CD8-positive, alpha-beta T cell (primary cell): ENCODE measurements at regions of chr16 and their contacts with region 1.

Region 1: GRCh38 chr16:71808593-71809459 is at the start of gene AP1G1:
- DNase-seq: peak; percentile 87 to 99 (median 93)
- ATAC-seq: peak; percentile 89
- H3K4me3 ChIP-seq: peak within 1 kb of the TSS; percentile 95
- H3K4me3 Mint-ChIP-seq: peak within 1 kb of the TSS; percentile 95
- H3K27ac ChIP-seq: peak within 1 kb of the TSS; percentile 98
- H3K27ac Mint-ChIP-seq: peak within 1 kb of the TSS; percentile 99
- H3K4me1 ChIP-seq: peaks cover 26% of the 10 kb centered on the region
- H3K4me1 Mint-ChIP-seq: peaks cover 40% of the 10 kb centered on the region
- H3K27me3 ChIP-seq: no peaks in the 10 kb centered on the region
- H3K27me3 Mint-ChIP-seq: no peaks in the 10 kb centered on the region
- CTCF ChIP-seq: no peak
- total RNA-seq, gene AP1G1: 179 to 202 TPM

Region 2: DNA sequence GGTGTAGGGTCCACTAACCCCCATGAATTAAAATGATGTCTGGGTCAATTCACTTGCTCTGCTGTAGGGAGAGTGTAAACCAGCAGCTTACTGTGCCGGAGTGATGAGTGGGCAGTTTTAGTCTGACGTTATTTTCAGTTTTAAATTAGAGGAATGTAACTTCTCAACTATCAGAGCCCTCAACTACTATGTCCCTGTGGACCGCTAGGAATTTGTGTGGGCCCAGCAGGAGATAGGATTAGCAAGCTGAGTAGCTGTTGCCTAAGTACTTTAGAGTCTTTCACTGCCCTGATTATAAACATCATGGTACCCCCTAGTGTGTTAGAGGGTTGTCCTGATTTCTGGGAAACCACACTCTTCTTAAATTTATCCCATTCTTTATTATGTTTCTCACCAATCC is 171.4 kb before region 1 on chr16:
- CTCF ChIA-PET with region 1: no interaction called
- POLR2A ChIA-PET with region 1: no interaction called
- intact Hi-C with region 1: no loop called
- DNase-seq: no peak
- ATAC-seq: no peak
- H3K4me3 ChIP-seq: no peak overlapping the region
- H3K4me3 Mint-ChIP-seq: no peak overlapping the region
- H3K27ac ChIP-seq: no peak overlapping the region
- H3K27ac Mint-ChIP-seq: no peak overlapping the region
- H3K4me1 ChIP-seq: no peaks in the 10 kb centered on the region
- H3K4me1 Mint-ChIP-seq: no peaks in the 10 kb centered on the region
- H3K27me3 ChIP-seq: no peaks in the 10 kb centered on the region
- H3K27me3 Mint-ChIP-seq: no peaks in the 10 kb centered on the region
- CTCF ChIP-seq: no peak

Region 3: GRCh38 chr16:71794943-71795342 is 13.9 kb before region 1 on chr16:
- CTCF ChIA-PET with region 1: interaction called, 3 read pairs
- POLR2A ChIA-PET with region 1: interaction called, 11 read pairs
- intact Hi-C with region 1: no loop called
- DNase-seq: no peak
- ATAC-seq: no peak
- H3K4me3 ChIP-seq: no peak overlapping the region
- H3K4me3 Mint-ChIP-seq: peak overlapping the region; percentile 3
- H3K27ac ChIP-seq: peak overlapping the region in 1 of 2 experiments; percentile 31
- H3K27ac Mint-ChIP-seq: peak overlapping the region; percentile 32
- H3K4me1 ChIP-seq: peaks cover 53% of the 10 kb centered on the region
- H3K4me1 Mint-ChIP-seq: peaks cover 65% of the 10 kb centered on the region
- H3K27me3 ChIP-seq: no peaks in the 10 kb centered on the region
- H3K27me3 Mint-ChIP-seq: no peaks in the 10 kb centered on the region
- CTCF ChIP-seq: no peak

Region 4: GRCh38 chr16:71845639-71846430 is 37.0 kb after region 1 on chr16 and contains the start of gene ATXN1L:
- CTCF ChIA-PET with region 1: interaction called, 4 read pairs
- POLR2A ChIA-PET with region 1: interaction called, 15 read pairs
- intact Hi-C with region 1: loop called (anchors 1 kb)
- DNase-seq: peak; percentile 88 to 98 (median 93)
- ATAC-seq: peak; percentile 94
- H3K4me3 ChIP-seq: peak within 1 kb of the TSS; percentile 87 to 97
- H3K4me3 Mint-ChIP-seq: peak within 1 kb of the TSS; percentile 90
- H3K27ac ChIP-seq: peak within 1 kb of the TSS; percentile 88 to 93
- H3K27ac Mint-ChIP-seq: peak within 1 kb of the TSS; percentile 94
- H3K4me1 ChIP-seq: peaks cover 16% of the 10 kb centered on the region
- H3K4me1 Mint-ChIP-seq: peaks cover 39% of the 10 kb centered on the region
- H3K27me3 ChIP-seq: no peaks in the 10 kb centered on the region
- H3K27me3 Mint-ChIP-seq: no peaks in the 10 kb centered on the region
- CTCF ChIP-seq: peak; percentile 12
- total RNA-seq, gene ATXN1L: 64.9 to 67.4 TPM

Region 5: DNA sequence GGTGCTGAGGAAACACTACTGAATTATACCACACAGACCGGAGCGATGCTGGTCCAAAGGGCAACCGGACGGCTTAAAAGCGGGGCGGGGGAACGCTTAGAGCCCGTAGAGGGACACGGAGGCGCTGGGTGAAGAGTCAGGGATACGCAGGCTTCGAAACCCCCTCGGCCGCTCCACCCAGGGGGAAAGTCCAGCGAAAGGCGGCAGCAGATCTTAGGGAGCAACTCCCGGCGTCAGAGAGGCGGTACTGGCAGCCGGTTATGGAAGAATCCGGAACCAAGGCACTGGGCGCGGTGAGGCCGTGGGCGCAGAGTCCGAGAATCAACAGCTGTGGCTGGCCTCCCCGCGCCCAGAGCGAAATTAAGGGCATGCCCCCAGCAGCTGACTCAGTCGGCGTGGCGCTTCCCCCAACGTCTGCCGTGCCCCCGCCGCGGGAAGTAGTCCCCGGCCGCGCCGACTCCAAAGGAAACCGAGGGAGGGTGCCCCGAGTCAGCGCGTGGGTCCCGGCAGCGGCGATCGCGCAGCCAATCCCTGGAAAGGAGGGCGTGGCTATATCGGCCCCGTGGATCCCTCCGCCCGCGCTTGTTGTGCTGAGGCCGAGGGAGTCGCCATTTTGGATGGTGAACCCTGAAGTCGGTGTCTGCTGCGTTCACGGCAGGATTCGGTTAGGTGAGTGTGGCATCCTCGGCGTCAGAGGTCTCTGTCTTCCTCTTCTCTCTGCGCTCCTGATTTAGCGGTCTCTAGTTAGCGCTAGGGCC is 86.3 kb after region 1 on chr16 and contains the start of gene IST1:
- CTCF ChIA-PET with region 1: interaction called, 3 read pairs
- POLR2A ChIA-PET with region 1: interaction called, 46 read pairs
- intact Hi-C with region 1: loop called (anchors 1 kb)
- DNase-seq: peak; percentile 95 to 99 (median 98)
- ATAC-seq: peak; percentile 94
- H3K4me3 ChIP-seq: peak within 1 kb of the TSS; percentile 98 to 99
- H3K4me3 Mint-ChIP-seq: peak within 1 kb of the TSS; percentile 97
- H3K27ac ChIP-seq: peak within 1 kb of the TSS; percentile 97
- H3K27ac Mint-ChIP-seq: peak within 1 kb of the TSS; percentile 97
- H3K4me1 ChIP-seq: peaks cover 34% of the 10 kb centered on the region
- H3K4me1 Mint-ChIP-seq: peaks cover 32% of the 10 kb centered on the region
- H3K27me3 ChIP-seq: no peaks in the 10 kb centered on the region
- H3K27me3 Mint-ChIP-seq: no peaks in the 10 kb centered on the region
- CTCF ChIP-seq: no peak
- total RNA-seq, gene IST1: 460 to 476 TPM